ENCODE measurements at regions of chr11 and their contacts with region 1.

Region 1: DNA sequence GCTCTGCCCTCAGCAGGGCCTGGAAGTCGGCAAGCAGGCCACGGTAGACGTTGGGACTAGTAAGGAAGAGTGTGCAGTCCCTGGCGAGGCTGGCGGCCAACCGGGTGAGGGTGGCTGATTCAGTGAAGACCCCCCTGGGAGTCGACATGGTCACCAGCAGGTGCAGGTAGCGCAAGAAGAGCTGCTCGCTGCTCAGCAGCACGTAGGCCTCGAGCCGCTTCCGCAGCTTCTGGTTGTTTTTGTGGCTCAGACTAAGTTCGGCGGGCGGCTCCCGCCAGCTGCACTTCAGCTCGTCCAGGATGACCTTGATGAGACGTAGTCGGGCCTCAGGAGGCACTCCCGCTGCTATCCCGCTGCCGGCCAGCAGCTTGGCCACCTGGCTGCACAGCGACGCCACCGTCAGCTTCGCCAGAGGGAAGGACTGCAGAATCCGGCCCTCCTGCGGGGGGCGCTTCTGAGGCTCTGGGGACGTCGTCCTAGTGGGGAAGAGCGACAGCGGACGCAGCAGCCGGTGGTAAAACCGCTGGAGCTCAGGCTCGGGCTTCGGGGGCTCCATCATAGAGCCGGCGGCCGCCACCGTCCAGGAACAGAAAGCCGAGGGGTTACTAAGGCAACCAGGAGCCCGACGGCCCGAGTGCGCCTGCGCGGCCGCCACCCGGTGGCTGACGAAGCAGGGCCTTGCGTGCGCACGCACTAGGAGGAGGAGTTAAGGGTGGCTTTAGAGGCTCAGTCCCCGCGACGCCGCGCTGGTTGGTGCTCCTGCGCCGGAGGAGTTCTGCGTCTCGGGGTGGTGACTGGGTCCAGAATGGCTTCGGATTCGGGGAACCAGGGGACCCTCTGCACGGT is at the starts of genes CCDC87 and CCS:
- DNase-seq: peak; percentile 99
- ATAC-seq: peak; percentile 92 to 95 (median 94)
- H3K4me3 ChIP-seq: peak within 1 kb of the TSS; percentile 61 to 84 (median 71)
- H3K27ac ChIP-seq: peak within 1 kb of the TSS; percentile 66 to 90 (median 86)
- H3K4me1 ChIP-seq: peaks cover 0 to 43% (median 2%) of the 10 kb centered on the region in 4 donors
- H3K27me3 ChIP-seq: no peaks in the 10 kb centered on the region
- CTCF ChIP-seq: peak; percentile 52 to 73 (median 58)
- POLR2A ChIP-seq: peak; percentile 89
- total RNA-seq, gene CCDC87: 0.07 to 0.37 (median 0.12) TPM in 5 of 6 experiments, not detected in the other
- total RNA-seq, gene CCS: 22.6 to 54.2 (median 34.3) TPM

Region 2: DNA sequence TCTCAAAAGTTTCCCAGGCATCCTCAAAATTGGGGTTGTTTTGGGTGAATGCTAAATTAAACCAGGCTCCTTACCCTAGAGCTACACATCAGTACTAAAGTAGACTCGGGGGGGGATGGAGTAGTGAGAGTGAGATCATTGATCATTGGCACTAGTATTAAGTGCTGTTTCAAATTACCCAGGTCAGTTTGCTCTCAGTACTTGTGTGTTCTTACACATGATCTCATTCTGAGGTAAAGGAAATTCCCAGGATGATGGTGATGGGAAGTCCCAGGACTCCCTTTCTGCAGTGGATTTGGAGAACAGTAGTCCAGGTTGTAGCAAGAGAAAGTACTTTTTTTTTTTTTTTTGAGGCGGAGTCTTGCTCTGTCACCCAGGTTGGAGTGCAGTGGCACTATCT is 58.3 kb after region 1 on chr11:
- intact Hi-C with region 1: no loop called
- DNase-seq: no peak
- ATAC-seq: peak in 2 of 4 donors; percentile 8 to 47
- H3K4me3 ChIP-seq: no peak overlapping the region
- H3K27ac ChIP-seq: no peak overlapping the region
- H3K4me1 ChIP-seq: no peaks in the 10 kb centered on the region
- H3K27me3 ChIP-seq: no peaks in the 10 kb centered on the region
- CTCF ChIP-seq: no peak
- POLR2A ChIP-seq: no peak

Region 3: DNA sequence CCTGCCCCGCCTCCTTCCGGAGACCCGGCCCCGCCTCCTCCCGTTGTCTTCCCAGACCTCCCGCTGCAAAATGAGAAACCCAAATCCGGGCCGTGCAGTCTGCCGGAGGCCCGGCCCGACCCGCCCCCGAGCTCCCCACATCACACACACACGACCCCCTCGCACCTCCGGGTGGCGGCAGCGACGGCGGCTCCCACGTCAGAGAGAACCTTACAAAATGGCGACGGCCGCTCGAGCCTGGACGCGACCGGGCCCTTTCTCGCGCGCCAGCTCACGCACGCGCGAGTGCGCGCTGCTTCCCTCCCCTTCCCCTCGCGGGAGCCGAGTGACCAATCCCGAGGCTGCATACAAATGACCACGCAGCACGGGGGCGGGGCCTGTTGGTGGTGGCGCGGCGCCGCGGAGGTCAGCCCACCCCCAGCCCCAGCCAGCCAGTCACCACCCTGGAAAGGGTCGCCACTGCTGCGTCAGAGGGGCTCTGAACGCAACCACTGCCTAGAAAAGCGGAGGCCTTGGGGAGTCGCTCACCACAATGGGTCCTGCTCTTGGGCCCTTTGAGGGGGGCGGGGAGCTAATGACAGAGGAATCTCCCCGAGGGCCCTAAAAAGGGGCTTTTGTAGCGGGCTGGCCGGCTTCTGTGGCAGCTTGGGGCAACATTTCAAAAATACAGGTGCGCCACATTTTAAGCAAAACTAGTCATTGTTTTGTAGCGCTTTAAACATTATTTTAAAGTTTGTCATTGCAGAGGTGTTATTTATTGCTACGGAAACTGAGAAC is 85.1 kb after region 1 on chr11 and contains the start of gene RBM4B:
- intact Hi-C with region 1: loop called in 1 of 2 experiments (anchors 5 kb)
- DNase-seq: peak; percentile 97
- ATAC-seq: peak; percentile 96 to 98 (median 96)
- H3K4me3 ChIP-seq: peak within 1 kb of the TSS; percentile 64 to 72 (median 66)
- H3K27ac ChIP-seq: peak within 1 kb of the TSS; percentile 77 to 83 (median 79)
- H3K4me1 ChIP-seq: peaks cover 0 to 23% (median 3%) of the 10 kb centered on the region in 4 donors
- H3K27me3 ChIP-seq: no peaks in the 10 kb centered on the region
- CTCF ChIP-seq: no peak
- POLR2A ChIP-seq: peak; percentile 76
- total RNA-seq, gene RBM4B: 3.6 to 9.4 (median 6.9) TPM

Region 4: GRCh38 chr11:66701432-66702240 is 109.0 kb after region 1 on chr11:
- intact Hi-C with region 1: no loop called
- DNase-seq: peak in 2 of 3 donors; percentile 76
- ATAC-seq: peak; percentile 59 to 82 (median 76)
- H3K4me3 ChIP-seq: no peak overlapping the region
- H3K27ac ChIP-seq: no peak overlapping the region
- H3K4me1 ChIP-seq: peaks cover 0 to 17% (median 5%) of the 10 kb centered on the region in 4 donors
- H3K27me3 ChIP-seq: no peaks in the 10 kb centered on the region
- CTCF ChIP-seq: no peak
- POLR2A ChIP-seq: no peak